ENCODE measurements at regions of chr17 and their contacts with region 1.

Region 1: DNA sequence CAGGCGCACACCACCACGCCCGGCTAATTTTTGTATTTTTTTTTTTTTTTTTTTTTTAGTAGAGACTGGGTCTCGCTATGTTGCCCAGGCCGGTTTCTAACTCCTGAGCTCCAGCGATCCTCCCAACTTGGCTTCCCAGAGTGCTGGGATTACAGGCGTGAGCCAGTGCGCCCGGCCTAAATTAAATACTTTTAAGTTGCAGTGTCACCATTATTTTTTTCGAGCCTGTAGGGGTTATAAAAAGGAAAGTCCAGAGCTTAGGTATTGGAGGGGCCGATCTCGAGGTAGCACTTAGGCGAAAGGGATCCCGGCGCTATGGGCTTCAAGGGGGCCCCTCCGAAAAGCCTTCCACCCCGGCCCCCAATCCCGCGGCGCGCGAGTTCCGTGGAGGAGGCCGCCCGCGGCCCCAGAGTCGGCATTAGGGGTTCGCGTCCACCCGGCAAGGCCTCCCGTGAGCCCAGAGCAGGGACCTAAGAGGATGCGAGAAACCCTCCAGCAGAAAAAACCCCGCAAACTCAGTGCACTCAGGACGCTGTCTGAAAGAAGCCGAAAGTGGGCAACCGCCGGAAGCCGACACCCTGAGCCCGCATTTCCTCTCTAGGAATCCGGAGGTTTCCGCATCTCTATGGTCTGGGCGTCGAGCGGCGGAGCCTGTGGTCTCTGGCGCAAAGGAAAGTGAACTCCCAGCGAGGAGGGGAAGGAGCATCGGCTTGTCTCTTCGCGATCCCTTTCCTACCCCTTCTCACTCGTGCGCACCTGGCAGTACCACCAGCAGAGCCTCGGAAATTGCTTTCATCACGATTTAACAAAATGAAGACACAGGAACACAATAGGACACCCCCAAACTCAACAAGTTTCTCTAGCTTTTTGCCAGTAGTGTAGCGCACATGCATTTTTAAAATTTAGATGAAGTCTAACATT is 14.1 kb upstream of the RGS9 start:
- DNase-seq: peak; percentile 90
- H3K27ac ChIP-seq: peak overlapping the region; percentile 81
- CTCF ChIP-seq: no peak

Region 2: GRCh38 chr17:65185668-65186382 is 62.7 kb after region 1 on chr17:
- CTCF ChIA-PET with region 1: no interaction called
- POLR2A ChIA-PET with region 1: interaction called, 18 read pairs
- DNase-seq: no peak
- H3K27ac ChIP-seq: no peak overlapping the region
- CTCF ChIP-seq: no peak

Measured in RWPE1 (cell line).